ENCODE measurements at regions of chr3 and their contacts with region 1.

Region 1: GRCh38 chr3:172039436-172040077 is at the start of gene FNDC3B:
- DNase-seq: peak; percentile 95
- H3K4me3 ChIP-seq: peak within 1 kb of the TSS; percentile 98
- H3K27ac ChIP-seq: peak within 1 kb of the TSS; percentile 21
- H3K4me1 ChIP-seq: peaks cover 24% of the 10 kb centered on the region
- CTCF ChIP-seq: no peak
- total RNA-seq, gene FNDC3B: 17.3 and 23.3 TPM in 2 replicates

Region 2: DNA sequence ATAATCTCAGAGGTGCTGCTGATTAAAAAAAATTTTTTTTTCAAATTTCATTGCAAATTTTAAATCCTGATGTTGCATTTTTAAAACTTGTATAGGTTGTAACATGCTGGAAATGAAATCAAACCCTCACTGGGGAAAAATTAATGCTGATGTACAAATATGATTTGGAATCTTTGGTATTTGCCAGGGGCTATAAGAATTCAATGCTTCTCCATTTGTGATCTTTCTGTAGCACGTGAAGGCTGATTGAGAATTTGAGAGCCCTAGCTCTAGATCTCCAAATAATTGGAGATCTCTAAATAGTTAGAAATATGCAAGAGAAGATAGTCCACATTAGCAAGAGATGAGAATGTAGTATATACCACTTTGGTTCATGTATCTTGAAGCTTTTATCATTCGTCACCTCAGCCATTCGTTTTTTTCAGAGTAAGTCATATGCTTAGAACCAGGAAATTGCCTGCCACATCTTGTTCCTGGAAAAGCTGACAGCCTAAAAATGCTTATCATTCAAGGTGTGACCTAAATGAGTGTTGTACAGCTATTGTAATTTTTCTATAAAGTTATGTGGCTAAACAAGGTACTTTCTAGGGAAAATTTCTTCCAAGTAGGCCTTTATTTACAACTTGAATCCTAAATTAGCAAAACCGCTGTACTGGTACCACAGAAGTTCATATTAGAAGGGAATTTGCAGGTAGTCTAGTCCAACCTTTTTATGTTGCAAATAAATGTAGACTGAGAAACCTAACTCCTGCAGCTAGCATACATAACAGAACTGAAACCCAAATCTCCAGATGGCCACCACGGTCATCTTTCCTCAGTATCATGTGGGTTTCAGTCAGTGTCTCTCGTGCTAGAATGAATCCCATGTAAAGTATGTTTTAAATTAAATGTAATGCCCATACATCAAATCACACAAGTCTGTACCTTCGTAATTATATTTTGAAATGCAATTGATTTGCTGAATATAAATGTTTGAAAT is 48.3 kb after region 1 on chr3:
- CTCF ChIA-PET with region 1: no interaction called
- POLR2A ChIA-PET with region 1: interaction called, 10 read pairs
- intact Hi-C with region 1: no loop called
- DNase-seq: peak; percentile 29
- H3K4me3 ChIP-seq: no peak overlapping the region
- H3K27ac ChIP-seq: no peak overlapping the region
- H3K4me1 ChIP-seq: peaks cover 23% of the 10 kb centered on the region
- CTCF ChIP-seq: no peak

Region 3: DNA sequence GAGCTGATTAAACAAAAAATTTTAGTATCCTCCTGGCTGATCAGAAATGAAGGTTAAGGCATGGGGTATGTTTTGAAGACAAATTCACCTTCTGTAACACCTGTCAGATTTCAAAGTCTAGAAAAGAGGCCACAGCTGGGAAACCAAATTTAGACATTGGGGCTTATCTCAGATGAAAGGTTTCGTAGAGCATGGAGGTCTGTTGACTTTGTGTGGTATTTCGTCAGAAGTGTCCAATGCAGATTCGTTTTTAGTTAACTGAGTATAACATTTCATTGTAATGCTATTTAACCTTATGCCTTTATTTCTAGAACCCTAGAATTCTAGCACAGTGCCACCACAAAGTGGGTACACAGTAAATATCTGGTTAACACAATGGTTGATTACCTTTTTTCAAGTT is 61.5 kb after region 1 on chr3:
- CTCF ChIA-PET with region 1: interaction called, 4 read pairs
- POLR2A ChIA-PET with region 1: interaction called, 29 read pairs
- intact Hi-C with region 1: loop called (anchors 1 kb)
- DNase-seq: peak; percentile 92
- H3K4me3 ChIP-seq: peak overlapping the region; percentile 53
- H3K27ac ChIP-seq: peak overlapping the region; percentile 96
- H3K4me1 ChIP-seq: peaks cover 97% of the 10 kb centered on the region
- CTCF ChIP-seq: no peak

Region 4: DNA sequence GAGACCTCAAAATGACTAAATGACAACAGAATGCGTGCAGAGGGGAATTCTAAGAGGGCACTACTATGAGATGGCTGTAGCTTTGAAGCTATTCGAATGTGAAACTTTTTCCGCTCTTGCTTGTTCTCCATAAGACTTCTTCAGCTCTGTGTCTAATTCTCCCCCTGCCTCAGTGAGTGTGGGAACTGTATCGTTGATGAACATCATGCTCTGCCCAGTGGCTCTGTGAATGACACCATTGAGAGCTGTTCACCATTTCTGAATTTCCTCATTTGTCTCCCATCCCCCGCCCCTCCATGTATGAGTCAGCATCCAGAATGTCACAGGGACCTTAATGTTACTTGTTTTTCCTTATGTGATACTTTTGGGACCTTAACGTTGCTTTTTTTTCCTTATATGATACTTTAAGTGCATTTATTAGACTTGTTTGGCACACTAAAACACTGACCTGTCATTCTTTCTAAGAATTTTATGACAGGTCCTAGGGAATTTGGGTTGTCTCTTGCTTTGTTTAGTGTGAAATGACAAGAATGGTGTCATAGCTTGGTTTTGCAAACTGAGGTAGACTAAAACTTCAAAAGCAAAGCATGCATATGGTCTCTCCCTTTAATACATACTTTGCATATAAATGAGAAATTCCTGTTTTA is 99.4 kb after region 1 on chr3:
- CTCF ChIA-PET with region 1: no interaction called
- POLR2A ChIA-PET with region 1: interaction called, 5 read pairs
- intact Hi-C with region 1: loop called (anchors 5 kb)
- DNase-seq: no peak
- H3K4me3 ChIP-seq: no peak overlapping the region
- H3K27ac ChIP-seq: no peak overlapping the region
- H3K4me1 ChIP-seq: peaks cover 33% of the 10 kb centered on the region
- CTCF ChIP-seq: no peak

Region 5: DNA sequence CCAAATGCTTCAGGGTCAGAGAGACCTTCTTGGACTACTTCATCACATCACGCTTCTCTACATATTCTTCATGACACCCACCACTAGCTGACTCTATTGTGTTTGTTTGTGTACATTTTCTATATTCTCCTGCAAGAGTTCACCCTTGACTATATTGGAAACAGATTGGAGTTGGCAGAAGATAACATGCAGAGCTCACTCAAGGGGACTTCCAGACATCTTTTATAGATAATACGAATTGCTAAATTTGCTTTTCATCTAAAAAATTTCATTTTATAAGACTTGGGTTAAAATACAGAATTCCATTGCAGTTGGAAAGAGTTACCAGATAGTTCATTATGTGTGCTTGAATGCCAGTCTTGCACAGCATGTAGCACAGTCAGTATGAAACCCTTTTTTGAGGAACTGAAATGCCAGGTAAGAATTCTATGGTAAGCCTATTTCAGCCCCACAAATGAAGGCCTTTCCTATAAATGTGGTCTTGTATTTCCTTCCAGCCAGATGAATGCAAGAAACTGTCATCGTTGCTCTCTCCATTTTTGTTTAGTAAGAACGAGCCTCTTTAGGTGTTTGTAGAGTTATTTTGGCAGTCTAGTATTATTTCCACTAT is 231.1 kb after region 1 on chr3:
- CTCF ChIA-PET with region 1: no interaction called
- POLR2A ChIA-PET with region 1: no interaction called
- intact Hi-C with region 1: loop called (anchors 5 kb)
- DNase-seq: peak; percentile 67
- H3K4me3 ChIP-seq: no peak overlapping the region
- H3K27ac ChIP-seq: no peak overlapping the region
- H3K4me1 ChIP-seq: peaks cover 16% of the 10 kb centered on the region
- CTCF ChIP-seq: no peak

Region 6: GRCh38 chr3:172332256-172333041 is 292.9 kb after region 1 on chr3:
- CTCF ChIA-PET with region 1: no interaction called
- POLR2A ChIA-PET with region 1: interaction called, 5 read pairs
- intact Hi-C with region 1: loop called (anchors 5 kb)
- DNase-seq: peak; percentile 57
- H3K4me3 ChIP-seq: no peak overlapping the region
- H3K27ac ChIP-seq: no peak overlapping the region
- H3K4me1 ChIP-seq: no peaks in the 10 kb centered on the region
- CTCF ChIP-seq: peak; percentile 95

Region 7: DNA sequence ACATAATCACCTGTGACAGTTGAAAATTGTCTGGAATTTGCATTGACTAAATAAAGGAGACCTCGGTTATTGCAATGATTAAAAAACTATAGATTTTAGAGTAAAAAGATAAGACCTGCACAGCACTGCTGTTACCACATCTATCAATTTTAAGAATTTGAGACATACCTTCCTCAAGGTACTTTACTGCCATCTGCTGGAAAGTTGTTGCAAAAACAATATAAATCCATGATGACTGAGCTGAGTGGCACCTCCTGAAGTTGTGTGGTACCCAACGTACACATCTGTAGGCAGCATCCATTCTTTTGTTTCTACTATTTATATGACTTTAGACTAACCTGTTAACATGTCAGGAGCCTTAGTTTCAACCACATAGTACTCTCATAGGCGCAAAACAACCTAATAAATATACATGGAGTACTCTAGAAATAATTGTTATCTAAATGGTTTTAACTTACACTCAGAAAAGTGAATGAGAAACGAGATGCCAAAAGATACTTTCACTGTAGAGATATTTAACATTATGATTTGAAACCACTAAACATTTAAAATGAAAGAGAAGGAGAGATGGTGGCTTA is 302.0 kb after region 1 on chr3:
- CTCF ChIA-PET with region 1: no interaction called
- POLR2A ChIA-PET with region 1: no interaction called
- intact Hi-C with region 1: loop called (anchors 1 kb)
- DNase-seq: peak; percentile 72
- H3K4me3 ChIP-seq: no peak overlapping the region
- H3K27ac ChIP-seq: no peak overlapping the region
- H3K4me1 ChIP-seq: no peaks in the 10 kb centered on the region
- CTCF ChIP-seq: peak; percentile 89